Mammary epithelial cell (primary cell): ENCODE measurements at regions of chr6 and their contacts with region 1.

Region 1: GRCh38 chr6:142356201-142356883 is 54.5 kb downstream of the ADGRG6 start:
- DNase-seq: peak; percentile 15
- H3K4me3 ChIP-seq: no peak overlapping the region
- H3K27ac ChIP-seq: no peak overlapping the region
- H3K4me1 ChIP-seq: peaks cover 7% of the 10 kb centered on the region
- H3K27me3 ChIP-seq: no peaks in the 10 kb centered on the region
- CTCF ChIP-seq: no peak

Region 2: DNA sequence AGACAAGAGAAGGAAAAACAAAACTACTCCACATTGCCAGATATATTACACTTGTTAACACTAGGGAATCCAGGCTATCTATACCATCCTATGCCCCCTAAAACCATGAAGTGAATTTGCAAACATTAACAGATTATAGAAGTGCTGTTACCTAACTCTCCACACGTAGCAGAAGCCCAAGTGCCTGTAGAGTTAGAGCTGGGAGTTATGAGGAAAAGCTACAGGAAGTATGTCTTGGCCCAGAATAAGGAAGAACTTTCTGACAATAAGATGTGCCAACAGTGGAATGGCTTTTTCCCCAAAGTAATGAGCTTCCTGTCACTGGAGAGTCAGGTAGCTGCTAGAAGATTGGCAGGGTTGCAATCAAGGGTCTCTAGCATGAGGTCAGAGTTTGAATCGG is 22.0 kb before region 1 on chr6:
- CTCF ChIA-PET with region 1: interaction called, 11 read pairs
- dilution Hi-C with region 1: no loop called
- in situ Hi-C with region 1: no loop called
- intact Hi-C with region 1: no loop called
- DNase-seq: no peak
- H3K4me3 ChIP-seq: no peak overlapping the region
- H3K27ac ChIP-seq: no peak overlapping the region
- H3K4me1 ChIP-seq: peaks cover 25% of the 10 kb centered on the region
- H3K27me3 ChIP-seq: no peaks in the 10 kb centered on the region
- CTCF ChIP-seq: no peak